Naive thymus-derived CD8-positive, alpha-beta T cell (primary cell): ENCODE measurements at regions of chr16 and their contacts with region 1.

Region 1: DNA sequence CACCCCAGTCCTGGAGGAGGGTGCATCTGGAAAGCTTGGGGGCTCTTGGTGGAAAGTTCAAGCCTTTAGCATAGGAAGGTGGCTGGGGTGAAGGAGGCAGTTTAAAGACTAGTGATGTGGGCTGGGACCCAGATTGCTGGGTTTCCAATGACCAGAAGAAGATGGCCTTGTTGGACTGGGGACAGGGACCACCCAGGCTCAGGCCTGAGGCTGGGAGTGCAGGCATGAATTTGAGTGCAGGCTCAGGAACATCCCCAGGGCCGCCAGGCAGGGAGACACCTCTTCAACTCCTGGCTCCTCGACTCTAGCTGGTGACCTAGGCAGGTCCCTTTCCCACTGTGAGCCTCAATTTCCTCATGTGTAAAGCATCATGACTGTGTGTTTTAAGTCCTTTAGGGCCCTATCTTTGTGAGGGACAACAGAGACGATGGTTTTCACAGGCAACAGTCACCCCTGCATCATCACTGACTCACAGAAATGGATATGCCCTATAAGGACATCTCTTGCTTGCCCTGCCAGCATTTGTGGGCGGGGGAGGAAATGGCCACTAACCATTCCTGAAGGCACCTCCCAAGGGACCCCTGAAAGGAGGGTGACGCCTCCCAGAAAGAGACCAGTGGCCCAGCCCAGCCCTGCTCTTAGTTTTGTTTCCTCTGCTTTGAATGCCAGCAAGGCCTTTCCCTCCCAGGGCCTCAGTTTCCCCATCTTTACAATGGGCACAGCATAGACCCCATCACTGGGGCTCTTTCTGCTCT is 11.1 kb downstream of the NLRC5 start:
- DNase-seq: no peak
- ATAC-seq: peak; percentile 25 to 26
- H3K4me3 Mint-ChIP-seq: peak overlapping the region; percentile 59 to 100 (median 77)
- H3K27ac Mint-ChIP-seq: peak overlapping the region; percentile 90 to 98 (median 96)
- H3K4me1 Mint-ChIP-seq: peaks cover 47 to 97% (median 95%) of the 10 kb centered on the region in 4 donors
- H3K27me3 Mint-ChIP-seq: no peaks in the 10 kb centered on the region

Region 2: DNA sequence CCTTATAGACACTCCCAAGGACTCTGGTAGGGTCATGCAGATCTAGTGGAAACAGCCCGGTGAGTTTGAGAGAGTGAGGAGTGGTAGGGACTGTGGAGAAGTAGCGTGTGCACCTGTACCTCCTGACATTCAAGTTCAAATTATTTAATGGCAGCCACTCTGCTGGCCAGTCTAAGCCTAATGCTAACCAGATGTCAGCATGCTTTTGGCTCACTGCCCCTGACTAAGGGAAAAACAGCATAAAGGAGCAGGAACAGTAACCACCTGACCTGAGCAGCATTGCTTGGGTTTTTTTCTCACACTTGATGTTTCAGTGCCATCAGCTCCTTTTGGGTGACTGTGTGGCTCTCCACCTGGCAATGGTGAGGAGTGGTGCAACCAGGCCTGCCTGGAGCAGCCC is 159.2 kb before region 1 on chr16:
- POLR2A ChIA-PET with region 1: no interaction called
- DNase-seq: no peak
- ATAC-seq: no peak
- H3K4me3 Mint-ChIP-seq: no peak overlapping the region
- H3K27ac Mint-ChIP-seq: peak overlapping the region in 1 of 10 donors; percentile 17
- H3K4me1 Mint-ChIP-seq: peaks cover 7 to 17% (median 11%) of the 10 kb centered on the region in 4 donors
- H3K27me3 Mint-ChIP-seq: no peaks in the 10 kb centered on the region

Region 3: DNA sequence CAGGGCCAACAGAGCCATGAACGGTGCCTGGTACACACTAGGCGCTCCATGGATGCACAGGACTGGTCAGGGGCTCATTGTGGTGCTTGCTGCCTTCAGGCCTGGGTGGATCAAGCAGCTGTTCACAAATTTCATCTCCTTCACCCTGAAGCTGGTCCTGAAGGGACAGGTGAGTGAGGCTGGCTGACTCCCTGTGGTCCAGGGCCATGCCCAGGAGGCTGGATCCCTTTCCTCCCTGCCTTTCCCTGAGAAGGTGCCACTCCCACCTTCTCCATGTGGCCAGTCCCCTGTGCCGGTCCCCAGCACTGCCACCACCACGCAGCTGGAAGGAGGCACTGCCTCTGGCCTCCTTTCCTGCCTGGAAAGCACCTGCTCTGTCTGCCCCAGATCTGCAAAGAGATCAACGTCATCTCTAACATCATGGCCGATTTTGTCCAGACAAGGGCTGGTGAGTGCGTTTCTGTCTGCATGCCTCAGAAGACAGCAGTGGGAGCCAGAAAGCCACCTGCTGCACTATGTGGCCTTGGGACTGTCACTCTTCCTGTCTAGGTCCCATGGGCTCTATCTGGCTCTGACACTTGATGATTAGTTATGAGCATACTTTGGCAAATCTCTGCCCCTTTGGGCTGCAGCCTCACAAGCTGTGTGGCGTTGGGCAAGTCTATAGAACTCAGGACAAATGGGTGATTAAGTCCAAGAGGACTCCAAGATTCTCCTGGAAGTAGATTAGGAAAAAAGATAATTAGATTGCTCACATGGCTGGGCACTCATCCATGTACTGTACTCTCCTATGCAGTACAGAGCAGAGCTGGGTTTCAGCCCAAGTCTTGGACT is 29.3 kb before region 1 on chr16:
- POLR2A ChIA-PET with region 1: interaction called, 10 read pairs
- DNase-seq: no peak
- ATAC-seq: peak; percentile 23 to 34
- H3K4me3 Mint-ChIP-seq: peak overlapping the region in 1 of 10 donors; percentile 70
- H3K27ac Mint-ChIP-seq: peak overlapping the region in 8 of 10 donors; percentile 4 to 90 (median 64)
- H3K4me1 Mint-ChIP-seq: peaks cover 24 to 57% (median 54%) of the 10 kb centered on the region in 4 donors
- H3K27me3 Mint-ChIP-seq: no peaks in the 10 kb centered on the region

Region 4: GRCh38 chr16:57289391-57290257 is 289.2 kb after region 1 on chr16:
- POLR2A ChIA-PET with region 1: no interaction called
- DNase-seq: no peak
- ATAC-seq: no peak
- H3K4me3 Mint-ChIP-seq: no peak overlapping the region
- H3K27ac Mint-ChIP-seq: no peak overlapping the region
- H3K4me1 Mint-ChIP-seq: peaks cover 6 to 8% (median 7%) of the 10 kb centered on the region in 4 donors
- H3K27me3 Mint-ChIP-seq: peaks cover 0 to 4% (median 0%) of the 10 kb centered on the region in 5 donors